Activated CD4-positive, alpha-beta memory T cell treated with anti-CD3 and anti-CD28 coated beads for 36 hours (primary cell): ENCODE measurements at regions of chr6 and their contacts with region 1.

Region 1: GRCh38 chr6:26285143-26286134 is 79.6 kb upstream of the BTN3A2 start:
- DNase-seq: peak; percentile 98
- H3K4me3 Mint-ChIP-seq: peak overlapping the region; percentile 92
- H3K27ac Mint-ChIP-seq: peak overlapping the region; percentile 96
- H3K4me1 Mint-ChIP-seq: peaks cover 16% of the 10 kb centered on the region
- H3K27me3 Mint-ChIP-seq: peaks cover 5% of the 10 kb centered on the region

Region 2: DNA sequence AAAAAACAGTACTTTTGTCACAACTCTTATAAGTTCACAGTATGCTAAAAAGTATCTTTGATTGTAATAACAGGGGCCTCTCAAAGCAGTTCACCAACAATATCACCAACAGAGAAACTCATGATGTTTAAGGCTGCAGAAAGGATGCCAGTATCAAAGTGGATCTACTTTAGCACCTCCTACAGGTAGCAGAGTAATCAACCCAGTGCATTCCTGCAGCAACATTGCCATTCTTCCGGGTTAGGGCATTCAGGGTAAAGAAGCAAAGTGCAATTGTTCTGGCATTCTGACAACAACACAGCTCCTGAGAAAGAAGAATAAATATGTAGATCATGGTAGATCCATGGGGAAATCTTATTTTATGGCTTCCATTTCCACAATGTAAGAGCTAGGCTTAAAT is 538.5 kb before region 1 on chr6:
- CTCF ChIA-PET with region 1: no interaction called
- POLR2A ChIA-PET with region 1: no interaction called
- intact Hi-C with region 1: no loop called
- DNase-seq: no peak
- H3K4me3 Mint-ChIP-seq: no peak overlapping the region
- H3K27ac Mint-ChIP-seq: no peak overlapping the region
- H3K4me1 Mint-ChIP-seq: no peaks in the 10 kb centered on the region
- H3K27me3 Mint-ChIP-seq: no peaks in the 10 kb centered on the region

Region 3: GRCh38 chr6:26175428-26176181 is 109.8 kb before region 1 on chr6:
- CTCF ChIA-PET with region 1: no interaction called
- POLR2A ChIA-PET with region 1: interaction called, 4 read pairs
- intact Hi-C with region 1: loop called (anchors 1 kb)
- DNase-seq: peak; percentile 63
- H3K4me3 Mint-ChIP-seq: peak overlapping the region; percentile 24
- H3K27ac Mint-ChIP-seq: peak overlapping the region; percentile 43
- H3K4me1 Mint-ChIP-seq: peaks cover 31% of the 10 kb centered on the region
- H3K27me3 Mint-ChIP-seq: no peaks in the 10 kb centered on the region

Region 4: DNA sequence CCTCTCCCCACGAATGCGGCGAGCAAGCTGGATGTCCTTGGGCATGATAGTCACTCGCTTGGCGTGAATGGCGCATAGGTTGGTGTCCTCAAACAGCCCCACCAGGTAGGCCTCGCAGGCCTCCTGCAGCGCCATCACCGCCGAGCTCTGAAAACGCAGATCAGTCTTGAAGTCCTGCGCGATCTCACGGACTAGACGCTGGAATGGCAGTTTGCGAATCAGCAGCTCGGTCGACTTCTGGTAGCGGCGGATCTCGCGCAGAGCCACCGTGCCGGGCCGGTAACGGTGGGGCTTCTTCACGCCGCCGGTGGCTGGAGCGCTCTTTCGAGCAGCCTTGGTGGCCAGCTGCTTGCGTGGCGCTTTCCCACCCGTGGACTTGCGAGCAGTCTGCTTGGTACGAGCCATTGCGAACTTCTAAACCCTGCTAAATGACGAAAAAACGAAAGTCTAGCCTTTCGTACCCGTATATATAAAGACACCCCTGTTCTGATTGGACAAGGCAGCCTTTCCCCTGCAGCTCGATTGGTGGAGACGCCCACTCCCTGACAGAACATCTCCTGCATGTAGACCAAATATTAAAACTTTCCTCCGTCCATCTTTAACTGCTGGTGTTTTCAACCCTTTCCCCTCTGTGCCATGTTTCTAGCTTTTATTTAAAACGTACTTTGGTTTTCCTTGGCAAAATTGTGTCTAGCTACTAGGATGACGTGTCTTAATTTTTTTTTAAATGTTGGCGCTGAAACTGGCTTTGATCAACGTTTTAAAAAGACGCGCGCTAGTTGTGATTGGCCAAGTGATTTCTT is 88.4 kb before region 1 on chr6:
- CTCF ChIA-PET with region 1: no interaction called
- POLR2A ChIA-PET with region 1: interaction called, 20 read pairs
- intact Hi-C with region 1: no loop called
- DNase-seq: peak; percentile 84
- H3K4me3 Mint-ChIP-seq: peak overlapping the region; percentile 86
- H3K27ac Mint-ChIP-seq: peak overlapping the region; percentile 99
- H3K4me1 Mint-ChIP-seq: peaks cover 31% of the 10 kb centered on the region
- H3K27me3 Mint-ChIP-seq: peaks cover 3% of the 10 kb centered on the region

Region 5: GRCh38 chr6:26216356-26216885 is 69.0 kb before region 1 on chr6:
- CTCF ChIA-PET with region 1: no interaction called
- POLR2A ChIA-PET with region 1: interaction called, 24 read pairs
- intact Hi-C with region 1: loop called (anchors 1 kb)
- DNase-seq: peak; percentile 89
- H3K4me3 Mint-ChIP-seq: no peak overlapping the region
- H3K27ac Mint-ChIP-seq: no peak overlapping the region
- H3K4me1 Mint-ChIP-seq: peaks cover 5% of the 10 kb centered on the region
- H3K27me3 Mint-ChIP-seq: no peaks in the 10 kb centered on the region

Region 6: GRCh38 chr6:26234421-26235296 is 50.8 kb before region 1 on chr6:
- CTCF ChIA-PET with region 1: interaction called, 4 read pairs
- POLR2A ChIA-PET with region 1: interaction called, 36 read pairs
- intact Hi-C with region 1: no loop called
- DNase-seq: peak; percentile 85
- H3K4me3 Mint-ChIP-seq: peak overlapping the region; percentile 82
- H3K27ac Mint-ChIP-seq: peak overlapping the region; percentile 99
- H3K4me1 Mint-ChIP-seq: peaks cover 29% of the 10 kb centered on the region
- H3K27me3 Mint-ChIP-seq: peaks cover 12% of the 10 kb centered on the region

Region 7: GRCh38 chr6:26249957-26250697 is 35.3 kb before region 1 on chr6:
- CTCF ChIA-PET with region 1: interaction called, 8 read pairs
- POLR2A ChIA-PET with region 1: no interaction called
- intact Hi-C with region 1: loop called (anchors 1 kb)
- DNase-seq: peak; percentile 84
- H3K4me3 Mint-ChIP-seq: peak overlapping the region; percentile 82
- H3K27ac Mint-ChIP-seq: peak overlapping the region; percentile 99
- H3K4me1 Mint-ChIP-seq: peaks cover 22% of the 10 kb centered on the region
- H3K27me3 Mint-ChIP-seq: no peaks in the 10 kb centered on the region

Region 8: GRCh38 chr6:26322645-26323482 is 37.4 kb after region 1 on chr6:
- CTCF ChIA-PET with region 1: no interaction called
- POLR2A ChIA-PET with region 1: interaction called, 3 read pairs
- intact Hi-C with region 1: loop called (anchors 2 kb)
- DNase-seq: peak; percentile 64
- H3K4me3 Mint-ChIP-seq: peak overlapping the region; percentile 82
- H3K27ac Mint-ChIP-seq: peak overlapping the region; percentile 80
- H3K4me1 Mint-ChIP-seq: peaks cover 21% of the 10 kb centered on the region
- H3K27me3 Mint-ChIP-seq: peaks cover 25% of the 10 kb centered on the region